IMR-90 (cell line): ENCODE measurements at regions of chr5 and their contacts with region 1.

Region 1: GRCh38 chr5:32076699-32077695 is 97.1 kb downstream of the GOLPH3 start:
- DNase-seq: peak; percentile 59
- ATAC-seq: peak; percentile 69
- H3K4me3 ChIP-seq: no peak overlapping the region
- H3K27ac ChIP-seq: no peak overlapping the region
- H3K4me1 ChIP-seq: no peaks in the 10 kb centered on the region
- H3K27me3 ChIP-seq: peaks cover 13% of the 10 kb centered on the region
- CTCF ChIP-seq: peak; percentile 84
- POLR2A ChIP-seq: no peak
- RAD21 ChIP-seq: peak; percentile 91

Region 2: DNA sequence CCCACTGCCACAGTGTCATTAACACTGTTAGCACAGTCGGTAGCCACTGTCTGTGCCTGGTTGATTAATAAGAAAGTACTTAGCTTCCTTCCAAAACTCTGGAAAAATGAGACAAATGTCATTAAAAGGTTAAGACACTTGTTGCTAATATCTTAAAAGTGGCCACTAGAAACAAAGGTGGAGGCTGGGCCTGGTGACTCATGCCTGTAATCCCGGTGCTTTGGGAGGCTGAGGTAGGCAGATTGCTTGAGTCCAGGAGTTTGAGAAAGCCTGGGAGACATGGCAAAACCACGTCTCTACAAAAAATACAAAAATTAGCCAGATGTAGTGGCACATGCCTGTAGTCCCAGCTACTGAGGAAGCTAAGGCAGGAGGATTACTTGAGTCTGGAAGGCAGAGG is 244.0 kb before region 1 on chr5:
- CTCF ChIA-PET with region 1: interaction called, 5 read pairs
- POLR2A ChIA-PET with region 1: no interaction called
- dilution Hi-C with region 1: loop called (anchors 25 kb)
- in situ Hi-C with region 1: loop called (anchors 10 kb)
- intact Hi-C with region 1: no loop called
- DNase-seq: no peak
- ATAC-seq: no peak
- H3K4me3 ChIP-seq: no peak overlapping the region
- H3K27ac ChIP-seq: no peak overlapping the region
- H3K4me1 ChIP-seq: no peaks in the 10 kb centered on the region
- H3K27me3 ChIP-seq: peaks cover 12% of the 10 kb centered on the region
- CTCF ChIP-seq: no peak
- POLR2A ChIP-seq: no peak
- RAD21 ChIP-seq: no peak

Region 3: DNA sequence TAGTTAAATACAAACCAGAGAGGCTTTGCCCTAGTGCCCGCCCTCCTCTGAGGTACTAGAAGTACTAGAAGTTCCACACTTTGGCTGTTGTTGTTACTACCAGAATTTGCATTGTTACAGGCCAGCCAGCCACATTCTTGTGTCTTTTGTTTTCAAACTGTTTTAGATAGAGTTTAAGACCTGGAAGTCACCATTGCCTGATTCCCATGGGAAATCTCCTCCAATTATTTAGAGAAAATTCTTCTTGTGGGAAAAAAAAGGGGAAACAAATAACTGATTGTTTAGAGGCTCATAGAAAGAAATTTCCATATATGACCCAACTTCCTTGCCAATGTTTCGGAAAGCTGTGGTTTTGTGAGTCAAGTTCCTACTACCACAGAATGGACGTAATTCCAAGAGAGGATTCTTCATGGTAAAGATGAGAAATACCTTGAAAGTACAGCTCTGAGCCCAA is 155.1 kb before region 1 on chr5:
- CTCF ChIA-PET with region 1: interaction called, 4 read pairs
- POLR2A ChIA-PET with region 1: no interaction called
- dilution Hi-C with region 1: no loop called
- in situ Hi-C with region 1: loop called (anchors 10 kb)
- intact Hi-C with region 1: no loop called
- DNase-seq: peak; percentile 49
- ATAC-seq: no peak
- H3K4me3 ChIP-seq: no peak overlapping the region
- H3K27ac ChIP-seq: no peak overlapping the region
- H3K4me1 ChIP-seq: no peaks in the 10 kb centered on the region
- H3K27me3 ChIP-seq: peaks cover 22% of the 10 kb centered on the region
- CTCF ChIP-seq: no peak
- POLR2A ChIP-seq: no peak
- RAD21 ChIP-seq: no peak

Region 4: DNA sequence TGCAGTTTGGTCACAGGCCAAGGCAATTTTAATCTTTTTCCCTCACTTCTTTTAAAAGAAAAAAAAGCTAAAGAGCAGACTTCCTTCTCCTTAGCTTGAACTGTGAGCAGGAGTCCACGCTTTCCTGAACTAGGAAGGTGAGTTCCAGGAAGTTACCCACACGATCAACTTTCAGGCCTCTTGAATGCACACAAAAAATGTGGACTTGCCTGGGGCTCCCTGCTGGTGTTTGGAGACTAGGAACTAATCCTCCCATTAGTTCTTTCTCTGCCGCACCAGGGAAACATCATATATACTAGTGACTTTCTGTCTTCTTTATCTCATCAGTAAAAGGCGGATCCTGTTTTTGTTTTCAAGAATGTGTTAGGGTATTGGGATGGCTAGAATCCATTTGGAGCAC is 142.8 kb before region 1 on chr5:
- CTCF ChIA-PET with region 1: interaction called, 6 read pairs
- POLR2A ChIA-PET with region 1: no interaction called
- dilution Hi-C with region 1: no loop called
- in situ Hi-C with region 1: loop called (anchors 10 kb)
- intact Hi-C with region 1: loop called (anchors 1 kb)
- DNase-seq: no peak
- ATAC-seq: no peak
- H3K4me3 ChIP-seq: no peak overlapping the region
- H3K27ac ChIP-seq: no peak overlapping the region
- H3K4me1 ChIP-seq: no peaks in the 10 kb centered on the region
- H3K27me3 ChIP-seq: peaks cover 39% of the 10 kb centered on the region
- CTCF ChIP-seq: no peak
- POLR2A ChIP-seq: no peak
- RAD21 ChIP-seq: no peak